HEK293 (cell line): ENCODE measurements at regions of chr6 and their contacts with region 1.

Region 1: GRCh38 chr6:16277101-16277981 is 39.0 kb downstream of the GMPR start:
- H3K4me3 ChIP-seq: no peak overlapping the region
- H3K27ac ChIP-seq: no peak overlapping the region; the same call in 1 of the 2 replicates
- H3K4me1 ChIP-seq: peaks cover 16% of the 10 kb centered on the region
- CTCF ChIP-seq: peak; percentile 74

Region 2: DNA sequence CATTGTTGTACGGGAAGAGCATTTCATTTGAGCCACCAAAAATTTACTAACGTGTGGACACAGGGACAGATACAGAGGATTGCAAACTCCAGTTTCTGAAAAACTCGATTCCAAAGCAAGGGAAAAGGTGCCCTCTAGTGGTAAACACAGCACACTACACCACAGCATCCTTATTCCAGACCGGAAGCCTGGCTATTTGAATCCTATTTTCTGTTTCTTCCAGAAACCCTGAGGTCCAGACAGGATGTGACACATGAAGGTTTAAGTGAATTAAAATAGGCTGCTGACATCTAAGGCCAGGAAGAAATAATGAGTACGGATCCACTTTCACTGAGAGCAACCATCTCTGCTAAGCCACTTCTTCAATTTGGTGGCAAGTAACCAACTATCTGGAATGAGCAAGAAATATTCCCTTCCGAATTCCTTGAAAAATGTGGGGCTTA is 70.7 kb before region 1 on chr6:
- CTCF ChIA-PET with region 1: interaction called, 39 read pairs
- POLR2A ChIA-PET with region 1: no interaction called
- H3K4me3 ChIP-seq: no peak overlapping the region
- H3K27ac ChIP-seq: peak overlapping the region; percentile 89; the same call in 1 of the 2 replicates
- H3K4me1 ChIP-seq: peaks cover 8% of the 10 kb centered on the region
- CTCF ChIP-seq: peak; percentile 70

Region 3: GRCh38 chr6:16222826-16223225 is 54.5 kb before region 1 on chr6:
- CTCF ChIA-PET with region 1: no interaction called
- POLR2A ChIA-PET with region 1: no interaction called
- H3K4me3 ChIP-seq: no peak overlapping the region
- H3K27ac ChIP-seq: no peak overlapping the region
- H3K4me1 ChIP-seq: no peaks in the 10 kb centered on the region
- CTCF ChIP-seq: no peak

Region 4: DNA sequence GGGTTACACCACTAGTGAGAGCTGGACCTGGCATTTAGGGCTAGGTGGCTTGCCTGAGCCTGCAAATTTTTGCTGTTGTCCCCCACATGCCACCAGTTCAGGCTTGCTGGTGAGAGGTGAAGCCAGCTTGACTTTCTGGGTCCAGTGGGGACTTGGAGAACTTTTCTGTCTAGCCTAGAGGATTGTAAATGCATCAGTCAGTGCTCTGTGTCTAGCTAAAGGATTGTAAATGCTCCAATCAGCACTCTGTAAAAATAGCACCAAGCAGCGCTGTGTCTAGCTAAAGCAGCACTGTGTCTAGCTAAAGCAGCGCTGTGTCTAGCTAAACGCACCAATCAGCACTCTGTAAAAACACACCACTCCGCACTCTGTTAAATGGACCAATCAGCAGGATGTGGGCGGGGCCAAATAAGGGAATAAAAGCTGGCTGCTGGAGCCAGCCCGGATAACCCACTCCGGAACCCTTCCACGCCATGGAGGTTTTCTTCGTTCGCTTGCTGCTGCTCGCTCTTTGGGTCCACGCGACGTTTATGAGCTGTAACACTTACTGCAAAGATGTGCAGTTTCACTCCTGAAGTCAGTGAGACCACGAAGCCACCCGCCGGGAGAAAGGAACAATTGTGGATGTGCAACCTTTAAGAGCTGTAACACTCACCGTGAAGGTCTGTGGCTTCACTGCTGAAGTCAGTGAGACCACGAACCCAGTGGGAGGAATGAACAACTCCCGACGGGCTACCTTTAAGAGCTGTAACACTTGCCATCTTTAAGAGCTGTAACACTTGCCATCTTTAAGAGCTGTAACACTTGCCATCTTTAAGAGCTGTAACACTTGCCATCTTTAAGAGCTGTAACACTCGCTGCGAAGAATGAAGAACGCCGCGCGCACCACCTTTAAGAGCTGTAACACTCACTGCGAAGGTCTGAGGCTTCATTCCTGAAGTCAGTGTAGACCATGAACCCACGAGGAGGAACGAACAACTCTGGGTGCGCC is 11.7 kb before region 1 on chr6:
- CTCF ChIA-PET with region 1: interaction called, 10 read pairs
- POLR2A ChIA-PET with region 1: no interaction called
- H3K4me3 ChIP-seq: no peak overlapping the region
- H3K27ac ChIP-seq: no peak overlapping the region
- H3K4me1 ChIP-seq: 0 out of 2 replicates have a peak, but pooled peaks cover 2% of the 10 kb centered on the region
- CTCF ChIP-seq: no peak

Region 5: GRCh38 chr6:16450285-16450684 is 172.9 kb after region 1 on chr6:
- CTCF ChIA-PET with region 1: no interaction called
- POLR2A ChIA-PET with region 1: no interaction called
- H3K4me3 ChIP-seq: no peak overlapping the region
- H3K27ac ChIP-seq: no peak overlapping the region
- H3K4me1 ChIP-seq: no peaks in the 10 kb centered on the region
- CTCF ChIP-seq: no peak

Region 6: GRCh38 chr6:16514249-16514648 is 236.9 kb after region 1 on chr6:
- CTCF ChIA-PET with region 1: no interaction called
- POLR2A ChIA-PET with region 1: no interaction called
- H3K4me3 ChIP-seq: no peak overlapping the region
- H3K27ac ChIP-seq: no peak overlapping the region
- H3K4me1 ChIP-seq: peaks cover 19% of the 10 kb centered on the region
- CTCF ChIP-seq: peak; percentile 29; the same call in 1 of the 2 replicates

Region 7: GRCh38 chr6:16964553-16965501 is 687.5 kb after region 1 on chr6:
- CTCF ChIA-PET with region 1: no interaction called
- POLR2A ChIA-PET with region 1: no interaction called
- H3K4me3 ChIP-seq: no peak overlapping the region
- H3K27ac ChIP-seq: no peak overlapping the region
- H3K4me1 ChIP-seq: no peaks in the 10 kb centered on the region
- CTCF ChIP-seq: peak; percentile 93